ENCODE measurements at regions of chr22 and their contacts with region 1.

Region 1: DNA sequence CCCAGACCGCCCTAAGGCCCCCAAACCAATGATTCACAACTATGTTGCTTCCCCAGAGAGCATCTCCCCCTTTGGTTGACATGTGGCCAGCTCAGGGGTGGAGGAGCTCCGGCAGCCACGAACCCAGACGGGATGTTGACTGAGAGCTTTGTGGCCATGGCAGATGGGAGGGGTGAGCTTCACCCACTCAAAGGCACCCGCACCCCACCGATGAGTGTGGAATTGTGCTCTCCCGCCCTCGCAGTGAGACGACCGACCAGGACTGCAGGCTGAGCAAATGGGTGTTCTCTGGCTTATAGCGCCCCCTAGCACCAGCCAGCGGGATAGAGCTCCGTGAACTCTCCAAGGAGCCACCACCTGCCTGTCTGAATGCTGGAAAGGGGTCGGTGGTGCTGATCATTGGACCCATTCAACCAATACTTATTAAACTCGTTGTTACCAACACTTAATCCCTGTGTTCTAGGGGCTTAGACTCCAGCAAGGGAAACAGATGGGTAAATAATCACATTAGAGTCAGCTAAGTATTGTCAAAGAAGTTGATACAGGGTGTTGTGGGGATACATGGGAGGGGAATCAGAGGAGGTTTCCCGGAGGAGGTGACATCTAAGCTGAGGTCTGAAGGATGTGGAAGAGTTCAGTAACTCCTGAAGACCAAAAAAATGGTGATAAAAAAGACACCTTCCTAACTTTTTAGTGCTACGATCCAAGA is 4.5 kb upstream of the TIMP3 start:
- DNase-seq: peak; percentile 81 to 90 (median 89)
- ATAC-seq: peak; percentile 57 to 71
- H3K4me3 ChIP-seq: no peak overlapping the region
- H3K27ac ChIP-seq: peak overlapping the region; percentile 36
- H3K4me1 ChIP-seq: peaks cover 5% of the 10 kb centered on the region
- H3K27me3 ChIP-seq: no peaks in the 10 kb centered on the region

Region 2: GRCh38 chr22:32528984-32529982 is 267.7 kb before region 1 on chr22:
- intact Hi-C with region 1: loop called (anchors 2 to 5 kb)
- DNase-seq: peak; percentile 93 to 96 (median 94)
- ATAC-seq: peak; percentile 79 to 80
- H3K4me3 ChIP-seq: no peak overlapping the region
- H3K27ac ChIP-seq: peak overlapping the region; percentile 90
- H3K4me1 ChIP-seq: peaks cover 18% of the 10 kb centered on the region
- H3K27me3 ChIP-seq: no peaks in the 10 kb centered on the region

Region 3: DNA sequence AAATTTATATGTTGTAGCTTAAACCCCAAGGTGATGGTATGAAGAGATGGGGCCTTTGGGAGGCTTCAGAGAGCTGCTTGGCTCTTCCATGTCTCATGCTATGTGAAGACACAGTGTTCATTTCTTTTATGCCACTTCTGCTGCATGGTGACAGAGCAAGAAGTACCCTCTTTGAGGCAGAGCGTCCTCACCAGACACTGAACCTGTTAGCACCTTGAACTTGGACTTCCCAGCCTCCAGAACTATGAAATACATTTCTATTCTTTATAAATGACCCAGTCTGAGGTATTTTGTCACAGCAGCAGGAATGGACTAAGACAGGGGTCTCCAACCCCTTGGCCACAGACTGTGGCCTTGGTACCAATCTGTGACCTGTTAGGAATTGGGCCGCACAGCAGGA is 142.0 kb before region 1 on chr22:
- intact Hi-C with region 1: loop called (anchors 2 to 5 kb)
- DNase-seq: no peak
- ATAC-seq: no peak
- H3K4me3 ChIP-seq: no peak overlapping the region
- H3K27ac ChIP-seq: no peak overlapping the region
- H3K4me1 ChIP-seq: no peaks in the 10 kb centered on the region
- H3K27me3 ChIP-seq: no peaks in the 10 kb centered on the region

Region 4: GRCh38 chr22:32850591-32851517 is 53.8 kb after region 1 on chr22:
- intact Hi-C with region 1: loop called in 3 of 4 experiments (anchors 5 to 10 kb)
- DNase-seq: peak; percentile 83 to 97 (median 94)
- ATAC-seq: peak; percentile 41 to 52
- H3K4me3 ChIP-seq: no peak overlapping the region
- H3K27ac ChIP-seq: peak overlapping the region; percentile 94
- H3K4me1 ChIP-seq: peaks cover 55% of the 10 kb centered on the region
- H3K27me3 ChIP-seq: no peaks in the 10 kb centered on the region

Region 5: DNA sequence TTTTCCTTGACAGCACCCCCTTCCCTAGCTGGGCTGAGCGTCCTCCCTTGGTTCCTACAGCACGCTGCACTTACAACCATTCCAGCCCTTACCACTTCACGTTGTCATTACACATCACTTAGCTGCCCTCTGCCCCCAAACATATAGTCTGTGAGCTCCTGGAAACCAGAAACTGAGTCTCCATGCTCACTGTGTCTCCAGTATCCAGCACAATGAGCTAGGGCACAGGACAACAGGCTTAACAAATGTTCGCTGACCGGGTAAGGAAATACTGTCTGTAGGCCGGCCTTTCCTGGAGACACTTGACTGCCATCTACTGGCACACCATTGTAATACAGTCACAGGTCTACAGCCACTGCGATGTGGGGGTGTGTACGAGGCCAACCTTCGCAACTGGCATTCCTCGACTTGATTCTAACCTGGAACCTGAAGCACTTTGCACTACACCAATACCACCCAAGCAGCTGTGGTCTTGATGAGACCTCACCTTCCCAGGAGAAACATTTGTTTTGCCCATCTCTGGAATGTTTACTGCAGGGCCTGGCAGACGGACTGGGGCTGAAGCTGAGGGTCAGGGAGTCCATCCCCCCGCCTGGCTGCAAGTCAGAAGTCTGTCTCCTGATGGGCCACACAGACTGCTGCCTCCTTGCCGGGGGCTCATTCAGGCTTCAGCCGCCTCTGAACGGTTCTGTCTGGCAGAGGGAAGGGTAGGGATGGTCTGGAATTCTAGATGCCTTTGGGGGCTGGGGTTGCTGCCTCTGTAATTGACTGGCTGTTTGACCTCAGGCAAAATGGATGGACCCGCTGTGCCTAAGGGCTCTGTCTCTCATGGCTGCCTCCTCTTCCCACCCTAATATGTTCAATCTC is 189.1 kb after region 1 on chr22:
- intact Hi-C with region 1: loop called (anchors 5 to 10 kb)
- DNase-seq: peak; percentile 57 to 73 (median 67)
- ATAC-seq: peak; percentile 95 to 96
- H3K4me3 ChIP-seq: no peak overlapping the region
- H3K27ac ChIP-seq: no peak overlapping the region
- H3K4me1 ChIP-seq: no peaks in the 10 kb centered on the region
- H3K27me3 ChIP-seq: no peaks in the 10 kb centered on the region